CD4-positive, alpha-beta T cell (primary cell): ENCODE measurements at regions of chr6 and their contacts with region 1.

Region 1: GRCh38 chr6:37177077-37177934 is 7.4 kb downstream of the PIM1 start:
- DNase-seq: no peak
- ATAC-seq: no peak
- H3K4me3 ChIP-seq: no peak overlapping the region
- H3K4me3 Mint-ChIP-seq: peak overlapping the region; percentile 21
- H3K27ac ChIP-seq: no peak overlapping the region
- H3K27ac Mint-ChIP-seq: peak overlapping the region; percentile 65
- H3K4me1 ChIP-seq: peaks cover 82% of the 10 kb centered on the region
- H3K4me1 Mint-ChIP-seq: peaks cover 65% of the 10 kb centered on the region
- H3K27me3 ChIP-seq: no peaks in the 10 kb centered on the region
- H3K27me3 Mint-ChIP-seq: no peaks in the 10 kb centered on the region
- CTCF ChIP-seq: no peak

Region 2: GRCh38 chr6:37190159-37190535 is 12.8 kb after region 1 on chr6:
- CTCF ChIA-PET with region 1: interaction called, 7 read pairs
- POLR2A ChIA-PET with region 1: interaction called, 25 read pairs
- intact Hi-C with region 1: no loop called
- DNase-seq: no peak
- ATAC-seq: no peak
- H3K4me3 ChIP-seq: no peak overlapping the region
- H3K4me3 Mint-ChIP-seq: no peak overlapping the region
- H3K27ac ChIP-seq: no peak overlapping the region
- H3K27ac Mint-ChIP-seq: no peak overlapping the region
- H3K4me1 ChIP-seq: peaks cover 49% of the 10 kb centered on the region
- H3K4me1 Mint-ChIP-seq: peaks cover 59% of the 10 kb centered on the region
- H3K27me3 ChIP-seq: no peaks in the 10 kb centered on the region
- H3K27me3 Mint-ChIP-seq: no peaks in the 10 kb centered on the region
- CTCF ChIP-seq: no peak